Esophagus squamous epithelium (tissue), 5 donors: ENCODE measurements at regions of chr1 and their contacts with region 1.

Region 1: DNA sequence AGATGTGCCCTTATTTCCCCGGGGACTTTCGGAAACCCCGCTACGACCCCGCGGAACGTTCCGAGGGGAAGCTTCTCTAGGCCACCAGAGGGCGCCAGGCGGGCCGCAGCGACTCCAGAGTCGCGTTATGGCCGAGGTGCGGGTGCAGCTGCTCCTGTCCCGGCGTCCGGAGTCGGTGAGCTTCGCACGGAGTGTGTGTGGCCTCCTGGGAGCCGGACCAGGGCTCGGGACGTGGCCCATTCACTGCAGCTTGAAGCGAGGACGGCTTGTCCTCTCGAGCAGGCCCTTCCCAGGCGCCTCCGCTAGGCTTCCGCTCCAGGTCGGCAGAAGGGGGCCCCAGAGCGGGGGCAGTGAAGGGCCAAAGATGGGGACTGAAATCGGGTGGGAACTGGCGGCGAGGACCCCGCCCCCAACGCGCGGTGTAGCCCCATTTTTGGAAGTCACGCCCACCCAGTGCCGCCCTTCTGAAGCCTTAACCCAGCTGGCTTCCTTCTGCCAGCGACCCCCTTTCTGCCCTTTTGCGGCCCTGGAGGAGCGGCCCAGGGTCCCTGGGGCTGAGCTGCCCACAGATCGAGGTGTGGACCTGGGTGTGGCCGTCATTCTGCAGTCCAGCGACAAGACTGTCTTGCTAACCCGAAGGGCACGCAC is at the start of gene NUDT17:
- DNase-seq: peak; percentile 26
- H3K4me3 ChIP-seq: peak within 1 kb of the TSS; percentile 49 to 74 (median 60)
- H3K27ac ChIP-seq: peak within 1 kb of the TSS; percentile 72 to 87 (median 78)
- H3K4me1 ChIP-seq: peaks cover 10 to 22% (median 16%) of the 10 kb centered on the region in 3 donors
- H3K27me3 ChIP-seq: no peaks in the 10 kb centered on the region
- CTCF ChIP-seq: peak; percentile 82 to 96 (median 89)
- POLR2A ChIP-seq: peak in 1 of 4 donors; percentile 17
- total RNA-seq, gene NUDT17: 1.1 to 3.8 (median 1.8) TPM

Region 2: DNA sequence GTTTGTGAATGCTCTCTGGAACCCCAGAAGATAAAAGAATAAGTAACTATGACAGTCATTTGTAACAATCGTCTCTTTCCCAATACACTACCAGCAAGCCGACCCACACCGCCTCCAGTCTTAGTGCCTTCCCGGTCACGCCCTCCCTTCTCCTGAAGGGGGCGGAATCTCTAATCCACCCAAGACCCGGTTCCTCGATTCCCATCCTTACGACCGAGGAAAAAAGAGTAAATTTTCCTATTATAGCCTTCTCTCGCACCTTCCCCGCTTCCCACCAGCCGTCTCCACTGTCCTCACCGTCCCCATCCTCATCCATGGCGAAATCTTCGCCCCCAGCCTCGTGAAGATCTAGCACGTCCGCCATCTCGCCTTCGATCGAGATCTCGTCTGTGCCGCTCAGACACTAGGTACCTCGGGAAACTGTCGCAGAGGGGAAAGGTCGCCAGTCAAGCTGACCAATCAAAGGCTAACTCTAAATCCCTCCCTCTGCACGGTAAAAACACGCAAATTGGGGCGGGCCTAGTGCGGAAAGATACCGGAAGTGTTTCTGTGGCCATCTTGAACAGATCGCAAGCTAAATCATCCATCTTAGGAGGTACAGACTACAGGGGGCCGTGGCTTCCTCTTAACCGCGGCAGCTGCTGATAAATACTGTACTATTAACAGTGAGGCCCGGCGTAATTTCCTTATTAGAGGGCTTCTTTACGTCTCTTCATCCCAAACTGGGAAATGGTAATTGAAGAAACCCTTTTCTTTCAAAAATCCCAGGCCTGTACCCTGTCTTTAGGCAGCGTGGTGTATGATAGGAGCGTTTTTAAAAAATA is 81.6 kb after region 1 on chr1 and contains the start of gene RBM8A:
- intact Hi-C with region 1: no loop called
- DNase-seq: peak; percentile 86
- H3K4me3 ChIP-seq: peak within 1 kb of the TSS; percentile 70 to 82 (median 72)
- H3K27ac ChIP-seq: peak within 1 kb of the TSS; percentile 90 to 99 (median 96)
- H3K4me1 ChIP-seq: peaks cover 13 to 42% (median 13%) of the 10 kb centered on the region in 3 donors
- H3K27me3 ChIP-seq: no peaks in the 10 kb centered on the region
- CTCF ChIP-seq: peak; percentile 56 to 79 (median 71)
- POLR2A ChIP-seq: peak in 3 of 4 donors; percentile 97 to 98 (median 97)
- total RNA-seq, gene RBM8A: 155 to 229 (median 200) TPM

Region 3: DNA sequence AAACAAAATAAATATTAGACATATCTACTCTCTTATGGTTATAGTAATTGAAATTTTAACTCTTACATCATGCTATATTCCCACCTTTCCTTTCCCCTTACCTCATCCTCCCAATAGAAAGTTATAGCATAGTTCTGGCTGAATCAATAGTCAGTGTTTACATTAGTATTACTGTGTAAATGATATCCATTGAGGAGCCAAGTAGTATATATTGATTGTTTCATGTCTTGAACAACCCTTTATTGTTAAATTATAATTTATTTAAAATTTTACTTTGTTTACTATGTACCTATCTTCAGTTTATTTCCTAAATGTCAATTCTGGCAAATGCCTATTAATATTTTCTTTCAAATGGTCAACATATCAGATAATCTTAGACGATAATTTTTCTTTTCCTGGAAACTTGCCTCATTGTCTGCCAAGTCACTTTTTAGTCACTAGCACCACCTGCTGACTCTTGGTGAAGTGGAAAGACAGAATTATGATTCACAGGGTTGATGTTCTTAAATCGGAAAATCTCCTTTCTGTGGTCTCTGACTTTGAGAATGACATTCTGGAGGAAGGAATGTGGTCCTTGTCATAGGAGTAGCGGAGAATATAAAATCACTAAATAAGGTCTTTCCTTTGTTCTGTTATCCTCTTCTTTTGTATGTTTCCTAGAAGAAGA is 167.2 kb after region 1 on chr1:
- intact Hi-C with region 1: loop called (anchors 5 kb)
- DNase-seq: no peak
- H3K4me3 ChIP-seq: no peak overlapping the region
- H3K27ac ChIP-seq: no peak overlapping the region
- H3K4me1 ChIP-seq: peaks cover 0 to 28% (median 7%) of the 10 kb centered on the region in 3 donors
- H3K27me3 ChIP-seq: peaks cover 0 to 6% (median 0%) of the 10 kb centered on the region in 4 donors
- CTCF ChIP-seq: peak; percentile 46 to 82 (median 65)
- POLR2A ChIP-seq: no peak

Region 4: DNA sequence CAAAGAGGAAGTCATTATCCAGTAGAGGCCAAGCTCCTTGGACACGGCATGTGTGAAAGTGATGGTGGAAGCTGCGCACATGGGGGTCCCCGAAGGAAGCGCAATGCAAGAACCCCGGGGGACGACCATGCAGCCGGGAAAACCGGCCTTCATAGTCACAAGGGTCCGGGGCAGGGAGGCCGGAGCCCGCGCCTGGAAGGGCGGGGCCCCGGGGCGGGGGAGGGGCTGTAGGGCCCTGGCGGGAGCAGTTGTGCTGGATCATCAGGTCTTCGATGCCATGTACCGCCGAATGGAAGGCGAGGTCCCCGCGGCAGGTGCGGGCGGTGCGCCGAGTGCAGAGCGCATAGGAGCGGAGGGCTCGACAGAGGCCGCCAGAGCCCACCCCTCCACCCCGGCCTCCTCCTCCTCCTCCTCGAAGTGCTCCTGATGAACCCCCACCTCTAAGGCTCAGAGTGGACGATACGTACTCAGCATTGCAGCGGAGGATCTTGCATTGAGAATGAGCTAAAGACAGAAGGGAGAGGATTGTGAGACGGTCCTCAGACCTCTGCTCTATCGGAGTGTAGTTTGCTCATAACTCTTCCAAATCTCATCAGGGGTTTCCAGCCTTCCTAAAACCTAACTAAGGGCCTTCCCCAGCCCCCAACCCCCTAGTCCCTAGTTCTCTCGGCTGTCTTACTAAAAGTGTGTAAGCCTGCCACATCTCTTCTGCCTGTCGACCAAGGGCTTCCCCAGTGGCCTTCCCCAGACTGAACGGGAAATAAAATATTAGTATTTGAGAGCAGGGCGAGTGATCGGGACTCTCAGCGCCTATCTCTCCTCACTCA is 173.8 kb after region 1 on chr1:
- intact Hi-C with region 1: loop called (anchors 5 kb)
- DNase-seq: no peak
- H3K4me3 ChIP-seq: peak overlapping the region in 3 of 4 donors; percentile 7 to 49 (median 26)
- H3K27ac ChIP-seq: no peak overlapping the region
- H3K4me1 ChIP-seq: peaks cover 6 to 11% (median 8%) of the 10 kb centered on the region in 3 donors
- H3K27me3 ChIP-seq: peaks cover 0 to 62% (median 8%) of the 10 kb centered on the region in 4 donors
- CTCF ChIP-seq: no peak
- POLR2A ChIP-seq: no peak